Naive thymus-derived CD8-positive, alpha-beta T cell (primary cell): ENCODE measurements at regions of chr5 and their contacts with region 1.

Region 1: DNA sequence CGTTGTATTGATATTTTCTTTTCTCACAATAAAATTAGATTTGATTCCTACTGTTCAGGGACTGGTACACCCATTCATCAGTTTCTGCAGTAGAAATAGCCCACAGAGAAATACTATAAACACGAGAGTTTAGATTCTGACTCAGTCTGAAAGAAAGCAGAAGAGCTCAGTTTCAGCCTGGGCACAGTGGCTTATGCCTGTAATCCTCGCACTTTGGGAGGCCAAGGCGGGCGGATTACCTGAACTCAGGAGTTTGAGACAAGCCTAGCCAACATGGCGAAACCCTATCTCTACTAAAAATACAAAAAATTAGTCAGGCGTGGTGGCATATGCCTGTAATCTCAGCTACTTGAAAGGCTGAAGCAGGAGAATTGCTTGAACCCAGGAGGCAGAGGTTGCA is 8.6 kb downstream of the ITK start:
- DNase-seq: no peak
- ATAC-seq: no peak
- H3K4me3 Mint-ChIP-seq: peak overlapping the region; percentile 80 to 100 (median 96)
- H3K27ac Mint-ChIP-seq: peak overlapping the region; percentile 71 to 99 (median 94)
- H3K4me1 Mint-ChIP-seq: peaks cover 43 to 92% (median 85%) of the 10 kb centered on the region in 4 donors
- H3K27me3 Mint-ChIP-seq: no peaks in the 10 kb centered on the region

Region 2: GRCh38 chr5:156947796-156948324 is 241.4 kb before region 1 on chr5:
- POLR2A ChIA-PET with region 1: no interaction called
- DNase-seq: no peak
- ATAC-seq: no peak
- H3K4me3 Mint-ChIP-seq: no peak overlapping the region
- H3K27ac Mint-ChIP-seq: peak overlapping the region in 2 of 10 donors; percentile 6 to 28
- H3K4me1 Mint-ChIP-seq: peaks cover 3 to 15% (median 9%) of the 10 kb centered on the region in 4 donors
- H3K27me3 Mint-ChIP-seq: no peaks in the 10 kb centered on the region

Region 3: DNA sequence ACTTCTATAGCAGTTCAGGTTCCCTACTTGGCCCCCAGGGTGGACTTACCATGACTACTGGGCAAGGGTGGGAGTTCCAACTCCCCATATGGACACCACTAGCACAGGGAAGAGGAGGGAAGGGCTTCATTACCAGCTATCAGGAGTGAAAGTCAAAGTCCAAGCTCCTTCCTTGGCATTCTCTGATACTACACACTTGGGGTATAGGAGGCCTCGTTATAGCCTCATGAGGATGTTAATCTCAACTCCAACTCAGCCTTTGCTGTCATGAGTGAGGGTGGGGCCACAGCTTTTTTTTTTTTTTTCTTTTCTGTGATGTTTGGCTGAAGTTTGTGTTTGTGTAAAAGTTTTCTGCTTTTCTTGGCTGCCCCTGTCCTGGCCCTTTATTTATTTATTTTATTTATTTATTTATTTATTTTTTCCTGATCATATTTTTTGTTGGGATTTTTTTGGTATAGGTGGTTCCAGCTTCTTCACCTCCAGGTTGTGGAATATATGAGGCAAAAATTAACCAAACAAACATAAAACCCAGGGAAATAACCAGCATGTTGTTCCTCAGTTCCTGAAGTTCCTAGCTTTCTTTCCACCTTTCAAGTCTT is 31.8 kb before region 1 on chr5:
- POLR2A ChIA-PET with region 1: interaction called, 50 read pairs
- DNase-seq: no peak
- ATAC-seq: no peak
- H3K4me3 Mint-ChIP-seq: peak overlapping the region in 1 of 10 donors; percentile 16
- H3K27ac Mint-ChIP-seq: peak overlapping the region in 4 of 10 donors; percentile 16 to 87 (median 74)
- H3K4me1 Mint-ChIP-seq: peaks cover 40 to 73% (median 67%) of the 10 kb centered on the region in 4 donors
- H3K27me3 Mint-ChIP-seq: no peaks in the 10 kb centered on the region